ENCODE measurements at regions of chr12 and their contacts with region 1.

Region 1: GRCh38 chr12:130796985-130797686 is 41.9 kb downstream of the STX2 start:
- DNase-seq: peak; percentile 78
- H3K4me3 Mint-ChIP-seq: peak overlapping the region; percentile 72
- H3K27ac Mint-ChIP-seq: peak overlapping the region; percentile 88
- H3K4me1 Mint-ChIP-seq: peaks cover 15% of the 10 kb centered on the region
- H3K27me3 Mint-ChIP-seq: no peaks in the 10 kb centered on the region

Region 2: DNA sequence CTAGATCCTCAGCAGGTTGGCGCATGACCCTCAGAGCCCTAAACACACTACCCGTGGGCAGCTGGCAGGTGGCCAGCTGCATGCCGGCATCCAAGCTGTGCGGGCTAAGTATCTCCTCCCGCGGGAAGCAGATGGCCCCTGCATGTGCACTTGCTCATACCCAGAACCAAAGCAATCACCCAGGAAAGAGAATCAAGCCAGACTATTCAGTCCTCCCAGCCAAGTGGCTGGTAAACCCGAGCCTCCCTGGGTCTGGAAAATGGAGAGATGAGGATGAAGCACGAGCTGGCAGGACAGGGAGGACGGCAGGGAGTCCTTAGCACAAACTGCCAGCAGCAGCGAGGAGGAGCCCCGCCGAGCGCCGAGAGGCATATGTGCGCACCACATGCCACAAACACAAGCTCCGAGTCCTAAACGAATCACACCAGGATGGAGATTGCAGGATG is 220.7 kb before region 1 on chr12:
- intact Hi-C with region 1: no loop called
- DNase-seq: no peak
- H3K4me3 Mint-ChIP-seq: no peak overlapping the region
- H3K27ac Mint-ChIP-seq: no peak overlapping the region
- H3K4me1 Mint-ChIP-seq: no peaks in the 10 kb centered on the region
- H3K27me3 Mint-ChIP-seq: no peaks in the 10 kb centered on the region

Region 3: DNA sequence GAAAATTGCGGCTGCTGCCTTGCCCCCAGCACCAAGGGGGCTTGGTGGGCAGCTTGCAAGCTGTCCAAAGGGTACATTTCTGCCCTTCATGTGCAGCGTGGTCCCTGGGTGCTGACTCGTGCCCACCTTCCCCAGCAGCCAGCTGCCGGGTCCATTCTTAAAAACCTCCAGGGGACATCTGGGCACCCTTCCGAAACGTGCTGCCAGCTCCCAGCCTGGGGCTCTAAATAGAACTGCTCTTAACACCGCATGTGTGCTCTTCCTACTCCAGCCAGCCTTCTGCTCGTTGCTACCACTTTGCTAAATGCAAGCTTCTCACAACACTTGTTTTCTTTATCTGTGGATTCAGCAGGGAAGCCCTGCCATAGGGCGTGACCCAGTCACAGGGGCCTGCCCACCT is 147.0 kb before region 1 on chr12:
- intact Hi-C with region 1: no loop called
- DNase-seq: no peak
- H3K4me3 Mint-ChIP-seq: no peak overlapping the region
- H3K27ac Mint-ChIP-seq: peak overlapping the region; percentile 68
- H3K4me1 Mint-ChIP-seq: no peaks in the 10 kb centered on the region
- H3K27me3 Mint-ChIP-seq: no peaks in the 10 kb centered on the region

Region 4: GRCh38 chr12:130761537-130762318 is 35.4 kb before region 1 on chr12:
- intact Hi-C with region 1: loop called (anchors 5 kb)
- DNase-seq: peak; percentile 85
- H3K4me3 Mint-ChIP-seq: peak overlapping the region; percentile 60
- H3K27ac Mint-ChIP-seq: no peak overlapping the region
- H3K4me1 Mint-ChIP-seq: peaks cover 12% of the 10 kb centered on the region
- H3K27me3 Mint-ChIP-seq: peaks cover 4% of the 10 kb centered on the region

Region 5: GRCh38 chr12:130775953-130776856 is 20.9 kb before region 1 on chr12:
- intact Hi-C with region 1: loop called (anchors 2 kb)
- DNase-seq: peak; percentile 75
- H3K4me3 Mint-ChIP-seq: peak overlapping the region; percentile 70
- H3K27ac Mint-ChIP-seq: no peak overlapping the region
- H3K4me1 Mint-ChIP-seq: peaks cover 12% of the 10 kb centered on the region
- H3K27me3 Mint-ChIP-seq: peaks cover 27% of the 10 kb centered on the region

Region 6: DNA sequence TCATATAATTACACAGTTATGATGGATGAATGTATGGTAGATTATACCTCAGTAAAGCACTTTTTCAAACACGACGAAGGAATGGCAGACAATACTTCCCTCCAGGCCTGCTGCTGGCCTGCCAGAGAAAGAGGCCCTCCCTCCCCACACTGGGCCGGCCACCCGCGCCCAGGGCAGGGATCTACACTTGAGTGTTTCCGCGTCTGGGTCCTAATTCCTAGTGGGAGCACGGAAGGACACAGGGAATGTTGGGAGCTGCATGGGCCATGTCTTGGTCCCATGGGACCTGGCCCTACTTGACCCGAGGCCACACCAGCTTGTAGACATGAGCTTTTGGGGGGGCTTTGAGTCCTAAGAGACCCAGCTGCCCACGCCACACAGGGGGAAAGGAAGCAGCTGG is 10.1 kb before region 1 on chr12:
- intact Hi-C with region 1: no loop called
- DNase-seq: no peak
- H3K4me3 Mint-ChIP-seq: no peak overlapping the region
- H3K27ac Mint-ChIP-seq: no peak overlapping the region
- H3K4me1 Mint-ChIP-seq: no peaks in the 10 kb centered on the region
- H3K27me3 Mint-ChIP-seq: no peaks in the 10 kb centered on the region